Activated CD8-positive, alpha-beta T cell treated with anti-CD3 and anti-CD28 coated beads, Interleukin-2, amount 10 ng/mL, durations not matched to agents 7 days and 5 days (primary cell): ENCODE measurements at regions of chr2 and their contacts with region 1.

Region 1: GRCh38 chr2:191566344-191566743 is 111.6 kb upstream of the NABP1 start:
- DNase-seq: peak; percentile 76
- ATAC-seq: peak; percentile 60
- H3K4me3 Mint-ChIP-seq: no peak overlapping the region
- H3K27ac Mint-ChIP-seq: no peak overlapping the region
- H3K4me1 Mint-ChIP-seq: peaks cover 57% of the 10 kb centered on the region
- H3K27me3 Mint-ChIP-seq: peaks cover 55% of the 10 kb centered on the region

Region 2: DNA sequence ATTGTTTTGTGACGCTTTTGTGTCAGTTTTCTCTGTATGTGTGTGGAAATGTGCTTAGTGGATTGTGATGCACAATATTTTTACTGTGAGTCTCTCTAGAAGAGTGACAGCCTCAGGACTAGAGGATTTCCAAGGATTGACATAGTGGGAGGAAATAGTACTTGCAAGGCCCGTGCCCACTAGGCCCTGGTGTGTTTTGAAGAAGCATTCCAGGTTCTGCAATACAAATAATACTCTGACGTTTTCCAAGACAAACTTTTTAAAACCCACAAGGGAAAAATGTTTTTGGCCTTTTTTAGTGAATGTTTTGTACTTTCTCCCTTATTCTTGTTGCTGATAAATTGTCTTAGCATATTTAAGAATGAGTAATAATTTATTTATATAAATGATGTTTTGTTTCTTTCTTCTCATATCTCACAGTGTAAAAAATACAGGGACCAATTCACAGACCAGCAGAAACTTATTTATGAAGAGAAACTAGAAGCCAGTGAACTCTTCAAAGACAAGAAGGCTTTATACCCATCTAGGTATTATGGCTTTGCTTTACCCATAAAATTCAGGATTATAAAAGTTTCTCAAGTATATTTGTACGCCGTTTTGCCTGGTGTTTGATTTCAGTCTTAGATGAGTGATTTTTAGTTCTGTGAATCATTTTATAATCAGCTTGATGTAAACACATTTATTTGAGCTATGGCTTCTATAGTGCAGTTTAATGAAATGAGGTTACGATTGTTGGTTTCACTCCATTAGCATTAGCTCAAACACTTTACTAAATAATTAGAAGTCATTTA is 155.5 kb before region 1 on chr2:
- CTCF ChIA-PET with region 1: no interaction called
- POLR2A ChIA-PET with region 1: no interaction called
- DNase-seq: no peak
- ATAC-seq: no peak
- H3K4me3 Mint-ChIP-seq: no peak overlapping the region
- H3K27ac Mint-ChIP-seq: no peak overlapping the region
- H3K4me1 Mint-ChIP-seq: peaks cover 4% of the 10 kb centered on the region
- H3K27me3 Mint-ChIP-seq: no peaks in the 10 kb centered on the region

Region 3: DNA sequence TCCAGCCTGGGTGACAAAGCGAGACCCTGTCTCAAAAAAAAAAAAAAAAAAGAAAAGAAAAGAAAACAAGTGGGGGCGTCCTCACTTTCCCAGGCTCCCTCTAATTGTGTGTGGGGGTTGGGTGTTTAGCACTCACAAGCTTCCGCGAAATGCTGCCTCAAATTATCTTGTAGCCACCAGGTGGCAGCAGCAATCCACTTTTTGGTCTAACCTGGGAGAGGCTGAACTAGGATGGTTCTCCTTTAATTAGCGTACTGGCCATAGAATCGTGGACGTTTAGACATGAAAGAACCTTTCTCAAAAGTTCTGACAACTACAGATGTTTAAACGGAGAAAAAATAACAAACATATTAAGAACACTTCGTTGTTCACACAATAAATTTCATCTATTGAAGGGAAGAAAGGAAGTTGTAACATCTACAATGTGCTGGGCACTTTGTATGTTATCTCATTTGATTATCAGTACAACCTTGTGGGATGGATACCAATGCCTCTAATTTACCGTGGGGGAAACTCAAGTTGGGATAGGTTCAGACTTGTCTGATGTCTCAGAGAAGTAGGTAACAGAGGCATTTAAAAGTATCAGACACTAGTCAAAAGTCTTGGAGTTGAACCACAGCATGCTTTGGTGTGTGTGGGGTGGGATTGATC is 11.1 kb before region 1 on chr2:
- CTCF ChIA-PET with region 1: interaction called, 13 read pairs
- POLR2A ChIA-PET with region 1: no interaction called
- DNase-seq: peak; percentile 87
- ATAC-seq: peak; percentile 88
- H3K4me3 Mint-ChIP-seq: no peak overlapping the region
- H3K27ac Mint-ChIP-seq: no peak overlapping the region
- H3K4me1 Mint-ChIP-seq: peaks cover 21% of the 10 kb centered on the region
- H3K27me3 Mint-ChIP-seq: peaks cover 28% of the 10 kb centered on the region

Region 4: GRCh38 chr2:191617575-191617974 is 51.2 kb after region 1 on chr2:
- CTCF ChIA-PET with region 1: interaction called, 11 read pairs
- POLR2A ChIA-PET with region 1: no interaction called
- DNase-seq: peak; percentile 71
- ATAC-seq: peak; percentile 95
- H3K4me3 Mint-ChIP-seq: peak overlapping the region; percentile 29
- H3K27ac Mint-ChIP-seq: peak overlapping the region; percentile 79
- H3K4me1 Mint-ChIP-seq: peaks cover 39% of the 10 kb centered on the region
- H3K27me3 Mint-ChIP-seq: no peaks in the 10 kb centered on the region

Region 5: DNA sequence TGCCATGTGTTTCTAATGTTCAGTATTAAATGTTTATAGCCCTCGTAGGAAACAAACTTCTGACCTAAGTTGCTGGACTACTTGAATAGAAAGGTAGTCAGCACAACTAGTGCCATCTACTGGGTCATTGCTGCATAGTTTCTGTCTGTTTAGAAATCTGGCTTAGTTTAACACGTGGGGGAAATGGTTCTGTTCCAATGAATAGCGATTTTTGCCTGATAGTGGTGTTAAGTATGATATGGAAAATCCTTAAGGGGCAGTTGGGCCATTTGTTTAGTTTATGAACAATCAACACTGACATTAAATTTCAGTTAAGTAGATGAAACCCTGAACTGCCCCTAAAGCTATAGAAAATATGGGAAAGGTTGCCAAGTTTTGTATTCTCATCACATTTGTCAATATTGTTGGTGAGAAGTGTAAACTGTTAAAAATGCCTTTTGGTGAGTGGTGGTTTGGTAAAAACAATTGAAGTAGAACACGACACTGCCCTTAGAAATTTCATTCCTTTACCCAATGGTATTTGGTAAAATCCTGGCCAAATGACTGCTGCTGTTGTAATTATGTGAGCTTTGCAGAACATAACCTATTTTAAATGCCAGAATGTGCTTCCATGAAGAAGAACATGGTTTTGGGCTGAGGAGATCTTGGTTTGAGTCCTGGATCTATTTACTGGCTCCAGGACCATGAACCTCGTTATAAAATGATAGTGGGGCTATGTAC is 124.8 kb after region 1 on chr2:
- CTCF ChIA-PET with region 1: interaction called, 27 read pairs
- POLR2A ChIA-PET with region 1: interaction called, 4 read pairs
- DNase-seq: peak; percentile 74
- ATAC-seq: peak; percentile 79
- H3K4me3 Mint-ChIP-seq: no peak overlapping the region
- H3K27ac Mint-ChIP-seq: no peak overlapping the region
- H3K4me1 Mint-ChIP-seq: peaks cover 18% of the 10 kb centered on the region
- H3K27me3 Mint-ChIP-seq: no peaks in the 10 kb centered on the region

Region 6: DNA sequence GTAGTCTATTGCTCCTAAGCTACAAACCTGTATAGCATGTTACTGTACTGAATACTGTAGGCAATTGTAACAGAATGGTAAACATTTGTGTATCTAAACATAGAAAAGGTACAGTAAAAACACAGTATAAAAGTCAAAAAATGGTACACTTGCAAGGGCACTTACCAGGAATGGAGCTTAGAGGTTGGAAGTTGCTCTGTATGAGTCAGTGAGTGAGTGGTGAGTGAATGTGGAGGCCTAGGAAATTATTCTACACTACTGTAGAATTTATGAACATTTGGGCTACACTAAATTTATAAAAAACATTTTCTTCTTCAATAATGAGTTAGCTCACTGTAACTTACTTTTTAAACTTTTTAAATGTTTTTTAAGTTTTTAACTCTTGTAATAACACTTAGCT is 130.6 kb after region 1 on chr2:
- CTCF ChIA-PET with region 1: interaction called, 26 read pairs
- POLR2A ChIA-PET with region 1: no interaction called
- DNase-seq: no peak
- ATAC-seq: no peak
- H3K4me3 Mint-ChIP-seq: no peak overlapping the region
- H3K27ac Mint-ChIP-seq: no peak overlapping the region
- H3K4me1 Mint-ChIP-seq: no peaks in the 10 kb centered on the region
- H3K27me3 Mint-ChIP-seq: no peaks in the 10 kb centered on the region